Heart left ventricle (tissue), 16 donors: ENCODE measurements at regions of chr3 and their contacts with region 1.

Region 1: DNA sequence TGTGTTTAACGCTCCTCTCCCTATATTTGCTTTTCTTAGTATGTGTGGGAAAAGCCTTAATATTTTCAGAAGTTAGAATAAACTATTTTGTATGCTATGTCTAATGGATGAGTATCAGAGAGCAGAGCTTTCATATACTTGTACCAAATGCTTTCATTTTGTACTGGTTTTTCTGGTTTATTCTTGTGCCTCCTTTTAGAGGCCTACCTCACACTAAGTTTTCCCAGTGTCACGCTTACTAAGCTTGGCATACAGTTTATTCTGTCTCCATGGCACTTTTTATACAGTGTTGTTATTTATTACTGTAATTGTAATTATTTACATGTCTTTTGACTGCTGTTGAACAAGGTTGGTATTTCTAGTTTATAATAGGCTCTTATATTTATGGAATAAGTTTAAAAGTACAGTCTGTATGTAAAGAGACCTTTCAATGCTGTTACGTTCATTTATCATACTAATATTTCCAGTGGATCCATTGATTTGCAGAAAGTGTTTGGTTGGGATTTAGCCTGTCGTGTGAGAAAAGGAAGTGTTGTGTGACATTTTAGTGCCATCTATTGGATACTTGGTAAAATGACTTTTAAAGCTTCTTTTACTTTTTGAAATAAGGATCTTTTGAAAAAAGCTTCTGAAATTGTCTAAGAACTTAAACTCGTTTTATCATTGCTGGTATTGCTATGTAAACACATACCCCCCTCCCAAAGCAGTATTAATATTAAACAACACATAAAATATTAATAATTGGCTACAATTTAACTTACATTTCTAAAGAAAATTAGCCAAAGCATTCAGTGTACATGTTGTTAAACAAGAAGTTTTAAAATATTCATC is 5.2 kb upstream of the EBLN2 start:
- DNase-seq: no peak
- ATAC-seq: peak in 2 of 4 donors; percentile 51 to 58
- H3K4me3 ChIP-seq: no peak overlapping the region
- H3K27ac ChIP-seq: peak overlapping the region in 4 of 12 donors; percentile 21 to 61 (median 30)
- H3K4me1 ChIP-seq: peaks cover 0 to 41% (median 11%) of the 10 kb centered on the region in 12 donors
- H3K27me3 ChIP-seq: no peaks in the 10 kb centered on the region
- CTCF ChIP-seq: peak; percentile 30 to 69 (median 58)
- POLR2A ChIP-seq: no peak

Region 2: GRCh38 chr3:72938471-72939265 is 117.6 kb before region 1 on chr3:
- intact Hi-C with region 1: loop called (anchors 1 to 5 kb)
- DNase-seq: peak in 4 of 5 donors; percentile 54 to 79 (median 58)
- ATAC-seq: peak; percentile 85 to 96 (median 92)
- H3K4me3 ChIP-seq: peak overlapping the region in 1 of 12 donors; percentile 15
- H3K27ac ChIP-seq: peak overlapping the region in 11 of 12 donors; percentile 24 to 70 (median 49)
- H3K4me1 ChIP-seq: peaks cover 0 to 28% (median 7%) of the 10 kb centered on the region in 12 donors
- H3K27me3 ChIP-seq: no peaks in the 10 kb centered on the region
- CTCF ChIP-seq: peak in 11 of 12 donors; percentile 47 to 80 (median 62)
- POLR2A ChIP-seq: no peak

Region 3: GRCh38 chr3:72960812-72961518 is 95.3 kb before region 1 on chr3:
- intact Hi-C with region 1: loop called in 1 of 10 experiments (anchors 5 kb)
- DNase-seq: peak in 4 of 5 donors; percentile 62 to 80 (median 72)
- ATAC-seq: peak; percentile 83 to 92 (median 88)
- H3K4me3 ChIP-seq: no peak overlapping the region
- H3K27ac ChIP-seq: peak overlapping the region; percentile 60 to 92 (median 84)
- H3K4me1 ChIP-seq: peaks cover 0 to 53% (median 15%) of the 10 kb centered on the region in 12 donors
- H3K27me3 ChIP-seq: no peaks in the 10 kb centered on the region
- CTCF ChIP-seq: no peak
- POLR2A ChIP-seq: no peak